ENCODE measurements at regions of chr20 and their contacts with region 1.

Region 1: DNA sequence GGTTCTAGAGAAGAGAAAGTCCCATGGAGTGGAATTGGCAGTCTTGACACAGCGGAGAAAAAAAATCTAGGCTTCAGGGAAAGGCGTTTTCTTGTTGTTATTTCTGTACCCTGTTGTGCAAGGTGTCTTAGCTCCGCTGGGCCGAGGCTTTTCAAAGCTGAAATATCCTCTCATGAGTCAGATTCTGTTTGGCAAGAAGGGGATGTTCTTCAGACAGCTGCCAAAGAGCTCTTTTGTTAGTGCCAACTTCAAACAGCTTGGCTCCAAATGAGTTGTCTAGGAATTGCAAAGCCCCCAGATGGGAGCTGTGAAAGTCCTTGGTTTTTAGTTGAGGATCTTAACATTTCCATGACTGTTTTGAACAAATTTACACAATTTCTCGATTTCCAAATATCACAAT is 45.6 kb downstream of the LRRN4 start:
- DNase-seq: peak; percentile 86
- ATAC-seq: no peak
- H3K4me3 ChIP-seq: peak overlapping the region; percentile 86 to 98 (median 97)
- H3K27ac ChIP-seq: peak overlapping the region; percentile 12
- H3K4me1 ChIP-seq: peaks cover 54% of the 10 kb centered on the region
- H3K27me3 ChIP-seq: no peaks in the 10 kb centered on the region; a peak in 1 of 5 replicates
- CTCF ChIP-seq: no peak
- EP300 ChIP-seq: peak in 1 of 2 experiments; percentile 77; a peak in 1 of 4 replicates
- POLR2A ChIP-seq: no peak
- RAD21 ChIP-seq: no peak

Region 2: DNA sequence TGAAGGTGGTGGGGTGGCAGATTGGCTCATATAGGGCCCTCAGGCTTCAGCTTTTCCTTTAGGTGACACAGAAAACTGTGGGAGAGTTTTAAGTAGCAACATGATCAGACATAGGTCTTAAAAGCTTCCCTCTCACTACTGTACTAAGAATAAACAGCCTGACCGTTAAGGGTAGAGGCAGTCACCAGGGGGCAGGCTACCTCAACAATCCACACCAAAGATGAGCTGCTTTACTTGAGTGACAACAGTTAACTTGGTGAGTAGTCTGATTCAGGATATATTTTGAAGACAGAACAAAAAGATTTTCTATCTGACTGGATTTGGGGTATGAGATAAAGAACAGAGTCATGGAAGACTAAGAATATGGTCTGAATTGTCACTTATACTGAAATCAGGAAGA is 451.1 kb before region 1 on chr20:
- CTCF ChIA-PET with region 1: interaction called, 14 read pairs
- POLR2A ChIA-PET with region 1: no interaction called
- in situ Hi-C with region 1: no loop called
- intact Hi-C with region 1: loop called (anchors 1 kb)
- DNase-seq: peak; percentile 61
- ATAC-seq: peak; percentile 98
- H3K4me3 ChIP-seq: no peak overlapping the region
- H3K27ac ChIP-seq: no peak overlapping the region
- H3K4me1 ChIP-seq: no peaks in the 10 kb centered on the region
- H3K27me3 ChIP-seq: no peaks in the 10 kb centered on the region
- CTCF ChIP-seq: peak; percentile 87
- EP300 ChIP-seq: no peak
- POLR2A ChIP-seq: no peak
- RAD21 ChIP-seq: peak; percentile 88

Region 3: GRCh38 chr20:5569021-5569420 is 439.2 kb before region 1 on chr20:
- CTCF ChIA-PET with region 1: interaction called, 3 read pairs
- POLR2A ChIA-PET with region 1: no interaction called
- in situ Hi-C with region 1: no loop called
- intact Hi-C with region 1: loop called (anchors 1 kb)
- DNase-seq: peak; percentile 71
- ATAC-seq: peak; percentile 94
- H3K4me3 ChIP-seq: no peak overlapping the region
- H3K27ac ChIP-seq: no peak overlapping the region
- H3K4me1 ChIP-seq: no peaks in the 10 kb centered on the region
- H3K27me3 ChIP-seq: no peaks in the 10 kb centered on the region
- CTCF ChIP-seq: peak; percentile 73
- EP300 ChIP-seq: no peak
- POLR2A ChIP-seq: no peak
- RAD21 ChIP-seq: peak; percentile 69

Region 4: DNA sequence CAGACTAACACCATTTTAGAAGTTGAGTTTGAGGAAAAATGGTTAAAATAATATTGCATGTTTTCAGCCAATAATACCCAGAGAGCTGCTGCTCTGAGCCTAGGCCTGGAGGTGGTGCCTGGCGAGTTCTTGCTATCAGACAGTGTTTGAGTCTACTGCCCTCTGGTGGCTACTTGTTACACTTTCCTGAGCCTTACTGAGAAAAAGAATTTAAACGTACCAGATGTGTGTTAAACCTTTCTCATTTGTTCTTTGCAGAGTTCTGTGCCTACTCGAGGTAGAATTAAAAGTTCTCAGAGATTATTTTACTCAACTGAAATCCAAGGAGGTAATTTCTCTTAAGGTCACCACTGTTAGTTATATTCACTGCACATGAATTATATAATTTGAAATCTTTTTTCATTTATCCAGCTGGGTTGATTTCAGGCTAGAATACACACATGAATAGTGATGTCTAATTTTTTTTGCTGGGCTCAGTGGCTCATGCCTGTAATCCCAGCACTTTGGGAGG is 219.8 kb before region 1 on chr20:
- CTCF ChIA-PET with region 1: no interaction called
- POLR2A ChIA-PET with region 1: no interaction called
- in situ Hi-C with region 1: no loop called
- intact Hi-C with region 1: loop called (anchors 1 kb)
- DNase-seq: peak; percentile 94
- ATAC-seq: peak; percentile 99
- H3K4me3 ChIP-seq: no peak overlapping the region
- H3K27ac ChIP-seq: no peak overlapping the region
- H3K4me1 ChIP-seq: peaks cover 33% of the 10 kb centered on the region
- H3K27me3 ChIP-seq: no peaks in the 10 kb centered on the region
- CTCF ChIP-seq: peak; percentile 95
- EP300 ChIP-seq: no peak
- POLR2A ChIP-seq: no peak
- RAD21 ChIP-seq: peak; percentile 98

Region 5: DNA sequence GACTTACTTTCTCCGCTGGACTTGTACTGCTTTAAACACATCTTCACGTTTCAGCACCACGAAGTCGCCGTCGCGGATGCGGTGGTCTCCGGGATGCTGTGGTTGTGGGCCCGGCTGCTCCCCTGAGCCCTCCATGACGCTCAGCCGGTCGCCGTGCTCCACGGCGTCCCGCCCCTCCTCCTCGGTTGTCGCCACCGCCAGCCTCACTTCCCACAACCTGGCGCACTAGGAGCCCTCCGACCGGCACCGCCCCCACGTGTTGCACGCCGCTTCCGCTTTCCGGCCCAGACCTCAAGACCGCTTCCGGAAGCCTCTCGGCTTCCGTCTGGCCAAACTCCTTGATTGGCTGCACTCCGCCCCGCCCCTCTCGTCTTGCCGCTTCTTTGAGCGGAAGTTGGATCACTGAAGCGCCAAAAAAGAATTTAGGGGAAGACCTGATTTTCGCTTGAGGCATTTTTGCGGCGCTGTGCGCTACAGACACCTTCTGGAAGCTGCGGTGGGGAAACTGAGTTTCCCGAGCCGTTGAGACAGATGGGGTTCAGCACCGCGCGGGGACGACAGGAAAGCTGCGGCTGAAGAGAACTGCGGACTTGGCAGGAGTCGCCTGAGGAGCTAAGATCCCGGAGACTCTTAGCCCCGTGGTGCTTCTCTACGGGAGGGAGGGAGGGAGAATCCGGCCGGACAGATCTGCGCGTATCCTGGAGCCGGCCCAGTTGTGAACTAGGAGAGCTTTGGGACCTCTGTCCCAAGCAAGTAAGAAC is 57.8 kb before region 1 on chr20 and contains the starts of genes MCM8 and TRMT6:
- CTCF ChIA-PET with region 1: no interaction called
- POLR2A ChIA-PET with region 1: no interaction called
- in situ Hi-C with region 1: no loop called
- intact Hi-C with region 1: loop called (anchors 1 kb)
- DNase-seq: peak; percentile 99
- ATAC-seq: peak; percentile 99
- H3K4me3 ChIP-seq: peak within 1 kb of the TSS; percentile 67 to 85 (median 83)
- H3K27ac ChIP-seq: peak within 1 kb of the TSS; percentile 82
- H3K4me1 ChIP-seq: peaks cover 36% of the 10 kb centered on the region
- H3K27me3 ChIP-seq: no peaks in the 10 kb centered on the region; a peak in 1 of 5 replicates
- CTCF ChIP-seq: peak; percentile 56
- EP300 ChIP-seq: peak in 1 of 2 experiments; percentile 34; a peak in 1 of 4 replicates
- POLR2A ChIP-seq: peak; percentile 86 to 92; a peak in 3 of 4 replicates
- RAD21 ChIP-seq: peak; percentile 60
- total RNA-seq, gene MCM8: 59.3 and 91.2 TPM in 2 replicates
- total RNA-seq, gene TRMT6: 37.8 and 51.1 TPM in 2 replicates

Region 6: DNA sequence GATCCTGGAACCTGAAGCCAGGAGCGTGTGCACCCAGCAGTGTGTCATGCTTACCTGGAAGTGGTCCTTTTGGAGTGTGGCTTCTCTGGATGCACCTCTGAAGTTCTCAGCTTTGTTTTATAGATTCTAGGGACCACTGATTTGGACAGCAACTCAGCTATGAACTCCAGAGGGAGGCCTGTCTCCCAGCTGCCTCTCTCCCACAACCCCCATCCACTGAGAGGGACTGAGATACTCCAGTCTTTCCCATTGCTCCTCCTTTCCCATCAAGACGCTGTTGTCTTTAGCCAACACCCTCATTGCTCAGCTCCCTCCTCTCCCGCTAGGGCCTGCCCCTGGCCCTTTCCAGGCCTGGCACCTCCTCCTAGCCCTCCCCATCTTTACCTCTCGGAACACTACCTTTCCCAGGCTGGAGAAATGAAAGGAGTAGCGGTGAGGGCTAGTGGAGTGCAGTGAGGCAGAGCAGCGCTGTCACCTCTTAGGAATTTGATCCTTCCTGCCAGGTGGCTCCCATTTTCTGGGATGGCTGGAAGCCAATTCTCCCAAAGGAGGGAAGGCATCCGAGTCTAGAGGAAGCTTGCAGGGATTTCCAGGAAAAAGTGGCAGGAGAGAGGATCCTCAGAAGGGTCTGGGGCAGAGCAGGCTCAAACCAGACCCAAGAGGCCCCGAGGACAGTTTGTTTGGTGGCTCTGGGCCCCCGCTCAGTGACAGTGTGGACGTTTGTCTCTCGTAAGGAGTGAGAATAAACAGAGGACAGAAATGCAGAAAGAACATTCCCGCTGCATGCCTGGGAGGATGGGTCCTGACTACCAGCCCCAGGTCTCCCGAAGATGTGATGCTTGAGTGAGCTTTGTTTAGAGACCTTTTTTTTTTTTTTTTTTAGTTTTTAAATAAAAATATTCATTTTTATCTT is 45.8 kb after region 1 on chr20 and contains the start of gene LRRN4:
- CTCF ChIA-PET with region 1: no interaction called
- POLR2A ChIA-PET with region 1: interaction called, 13 read pairs
- in situ Hi-C with region 1: no loop called
- intact Hi-C with region 1: no loop called
- DNase-seq: peak; percentile 34
- ATAC-seq: peak; percentile 58
- H3K4me3 ChIP-seq: peak within 1 kb of the TSS; percentile 42 to 65 (median 59)
- H3K27ac ChIP-seq: no peak within 1 kb of the TSS
- H3K4me1 ChIP-seq: peaks cover 49% of the 10 kb centered on the region
- H3K27me3 ChIP-seq: peaks cover 1 to 8% of the 10 kb centered on the region in 2 experiments; a peak in 1 of 5 replicates
- CTCF ChIP-seq: 0 out of 2 replicates have a peak, but pooled peaks have one; percentile 3
- EP300 ChIP-seq: no peak
- POLR2A ChIP-seq: no peak
- RAD21 ChIP-seq: no peak
- total RNA-seq, gene LRRN4: 0.20 and 0.25 TPM in 2 replicates

Region 7: GRCh38 chr20:6074145-6074561 is 65.9 kb after region 1 on chr20:
- CTCF ChIA-PET with region 1: interaction called, 4 read pairs
- POLR2A ChIA-PET with region 1: interaction called, 3 read pairs
- in situ Hi-C with region 1: no loop called
- intact Hi-C with region 1: loop called (anchors 1 kb)
- DNase-seq: peak; percentile 88
- ATAC-seq: peak; percentile 99
- H3K4me3 ChIP-seq: no peak overlapping the region
- H3K27ac ChIP-seq: peak overlapping the region; percentile 37
- H3K4me1 ChIP-seq: peaks cover 34% of the 10 kb centered on the region
- H3K27me3 ChIP-seq: no peaks in the 10 kb centered on the region; a peak in 1 of 5 replicates
- CTCF ChIP-seq: peak; percentile 80
- EP300 ChIP-seq: no peak
- POLR2A ChIP-seq: no peak
- RAD21 ChIP-seq: peak; percentile 75; the same call in 1 of the 2 replicates

Region 8: DNA sequence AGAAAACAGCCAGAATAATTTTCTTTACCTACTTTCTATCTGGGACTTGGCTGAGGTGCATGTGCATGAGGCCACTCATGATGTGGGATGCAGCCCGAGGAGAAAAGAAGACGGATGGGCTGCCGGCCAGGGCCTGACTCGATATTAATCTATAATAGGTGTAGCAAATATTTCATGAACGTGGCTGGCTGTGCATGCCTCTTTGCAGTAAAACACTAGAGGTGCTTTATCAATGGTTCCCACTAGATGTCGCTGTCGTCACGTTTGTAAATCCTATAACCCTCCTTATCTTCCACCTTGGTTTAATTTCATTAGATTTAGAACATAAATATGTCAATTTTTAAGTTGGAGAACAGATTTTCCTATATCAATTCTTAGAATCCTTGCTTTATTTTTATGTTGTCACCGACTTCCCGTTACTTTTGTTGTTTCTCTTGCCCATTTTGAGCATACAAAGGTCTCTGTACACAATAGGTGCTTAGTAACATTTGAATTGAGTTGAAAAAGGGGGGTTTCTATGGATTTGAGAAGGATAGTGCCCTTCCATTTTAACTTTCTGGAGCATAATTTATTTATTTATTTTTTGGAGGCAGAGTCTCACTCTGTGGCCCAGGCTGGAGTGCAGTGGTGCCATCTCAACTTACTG is 134.2 kb after region 1 on chr20:
- CTCF ChIA-PET with region 1: no interaction called
- POLR2A ChIA-PET with region 1: no interaction called
- in situ Hi-C with region 1: no loop called
- intact Hi-C with region 1: no loop called
- DNase-seq: peak; percentile 70
- ATAC-seq: peak; percentile 89
- H3K4me3 ChIP-seq: no peak overlapping the region
- H3K27ac ChIP-seq: no peak overlapping the region
- H3K4me1 ChIP-seq: no peaks in the 10 kb centered on the region
- H3K27me3 ChIP-seq: no peaks in the 10 kb centered on the region
- CTCF ChIP-seq: peak; percentile 87
- EP300 ChIP-seq: no peak
- POLR2A ChIP-seq: no peak
- RAD21 ChIP-seq: no peak; the same call in 1 of the 2 replicates